ENCODE measurements at regions of chr13 and their contacts with region 1.

Region 1: DNA sequence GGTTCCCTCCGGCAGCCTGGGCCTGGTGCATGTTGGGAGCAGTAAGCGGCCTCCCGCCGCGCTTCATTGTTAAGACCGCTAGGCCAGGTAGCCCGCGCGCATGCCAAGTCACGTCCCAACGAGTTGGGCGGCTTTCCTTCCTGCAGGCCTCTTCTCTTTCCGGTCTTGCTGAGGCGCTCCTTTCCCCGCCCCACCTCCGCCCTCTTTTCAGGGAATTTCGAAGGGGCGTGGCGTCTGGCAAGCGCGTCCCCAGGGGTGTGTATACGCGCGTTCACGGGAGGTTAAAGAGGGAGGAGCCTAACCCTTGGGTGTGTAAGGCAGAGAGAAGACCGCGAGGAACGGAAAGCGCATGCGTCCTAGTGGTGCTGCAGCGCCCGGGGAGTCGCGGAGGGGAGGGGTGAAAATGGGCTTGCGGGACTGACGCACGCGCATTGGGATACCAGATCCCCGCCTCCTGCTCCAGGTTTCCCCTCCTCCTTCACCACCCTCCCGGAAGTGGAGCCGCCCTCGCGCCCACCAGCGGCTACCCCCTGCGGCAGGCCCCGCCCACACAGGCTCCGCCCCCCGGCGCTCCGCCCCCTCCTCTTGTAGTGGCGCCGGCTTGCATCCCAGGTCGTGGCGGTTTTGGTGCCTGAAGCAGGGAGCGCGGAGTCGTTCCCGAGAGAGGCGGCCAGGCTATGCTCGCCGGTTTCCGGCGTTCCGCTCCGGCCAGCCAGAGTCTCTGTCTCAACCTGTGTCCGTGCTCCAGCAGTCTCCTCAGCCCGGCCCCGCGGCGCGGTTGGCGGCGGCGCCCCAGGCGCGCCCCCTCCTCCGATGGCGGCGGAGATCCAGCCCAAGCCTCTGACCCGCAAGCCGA is at the start of gene WDFY2:
- DNase-seq: peak; percentile 99
- ATAC-seq: peak; percentile 90
- H3K4me3 Mint-ChIP-seq: peak within 1 kb of the TSS; percentile 80
- H3K27ac Mint-ChIP-seq: peak within 1 kb of the TSS; percentile 96
- H3K4me1 Mint-ChIP-seq: peaks cover 38% of the 10 kb centered on the region
- H3K27me3 Mint-ChIP-seq: no peaks in the 10 kb centered on the region
- CTCF ChIP-seq: no peak
- total RNA-seq, gene WDFY2: 11.2 to 11.6 TPM

Region 2: GRCh38 chr13:51452361-51453206 is 131.5 kb before region 1 on chr13 and contains the start of gene INTS6:
- CTCF ChIA-PET with region 1: interaction called, 16 read pairs
- POLR2A ChIA-PET with region 1: interaction called, 18 read pairs
- intact Hi-C with region 1: loop called (anchors 2 kb)
- DNase-seq: peak; percentile 99
- ATAC-seq: peak; percentile 86
- H3K4me3 Mint-ChIP-seq: peak within 1 kb of the TSS; percentile 94
- H3K27ac Mint-ChIP-seq: peak within 1 kb of the TSS; percentile 99
- H3K4me1 Mint-ChIP-seq: peaks cover 40% of the 10 kb centered on the region
- H3K27me3 Mint-ChIP-seq: no peaks in the 10 kb centered on the region
- CTCF ChIP-seq: no peak
- total RNA-seq, gene INTS6: 52.4 to 54.5 TPM

Region 3: GRCh38 chr13:51614350-51614786 is 30.3 kb after region 1 on chr13:
- CTCF ChIA-PET with region 1: interaction called, 10 read pairs
- POLR2A ChIA-PET with region 1: interaction called, 6 read pairs
- intact Hi-C with region 1: no loop called
- DNase-seq: peak; percentile 77
- ATAC-seq: peak; percentile 93
- H3K4me3 Mint-ChIP-seq: peak overlapping the region; percentile 79
- H3K27ac Mint-ChIP-seq: peak overlapping the region; percentile 98
- H3K4me1 Mint-ChIP-seq: peaks cover 23% of the 10 kb centered on the region
- H3K27me3 Mint-ChIP-seq: no peaks in the 10 kb centered on the region
- CTCF ChIP-seq: no peak

Region 4: GRCh38 chr13:51764184-51765141 is 180.4 kb after region 1 on chr13:
- CTCF ChIA-PET with region 1: interaction called, 10 read pairs
- POLR2A ChIA-PET with region 1: interaction called, 4 read pairs
- intact Hi-C with region 1: no loop called
- DNase-seq: peak; percentile 85
- ATAC-seq: peak; percentile 89
- H3K4me3 Mint-ChIP-seq: peak overlapping the region; percentile 77
- H3K27ac Mint-ChIP-seq: peak overlapping the region; percentile 96
- H3K4me1 Mint-ChIP-seq: peaks cover 37% of the 10 kb centered on the region
- H3K27me3 Mint-ChIP-seq: no peaks in the 10 kb centered on the region
- CTCF ChIP-seq: no peak

Region 5: GRCh38 chr13:51803422-51804294 is 219.6 kb after region 1 on chr13 and contains the start of gene DHRS12:
- CTCF ChIA-PET with region 1: interaction called, 3 read pairs
- POLR2A ChIA-PET with region 1: interaction called, 4 read pairs
- intact Hi-C with region 1: loop called (anchors 5 kb)
- DNase-seq: peak; percentile 90
- ATAC-seq: peak; percentile 78
- H3K4me3 Mint-ChIP-seq: peak within 1 kb of the TSS; percentile 95
- H3K27ac Mint-ChIP-seq: peak within 1 kb of the TSS; percentile 100
- H3K4me1 Mint-ChIP-seq: peaks cover 55% of the 10 kb centered on the region
- H3K27me3 Mint-ChIP-seq: no peaks in the 10 kb centered on the region
- CTCF ChIP-seq: no peak
- total RNA-seq, gene DHRS12: 6.6 to 6.7 TPM